CD4-positive, alpha-beta T cell (primary cell): ENCODE measurements at regions of chr7 and their contacts with region 1.

Region 1: GRCh38 chr7:38398725-38399321 is 125.4 kb upstream of the TARP start:
- DNase-seq: peak; percentile 28 to 77 (median 50)
- ATAC-seq: peak; percentile 86
- H3K4me3 ChIP-seq: no peak overlapping the region
- H3K4me3 Mint-ChIP-seq: no peak overlapping the region
- H3K27ac ChIP-seq: no peak overlapping the region
- H3K27ac Mint-ChIP-seq: no peak overlapping the region
- H3K4me1 ChIP-seq: no peaks in the 10 kb centered on the region
- H3K4me1 Mint-ChIP-seq: no peaks in the 10 kb centered on the region
- H3K27me3 ChIP-seq: peaks cover 0 to 3% of the 10 kb centered on the region in 2 experiments
- H3K27me3 Mint-ChIP-seq: peaks cover 16% of the 10 kb centered on the region
- CTCF ChIP-seq: peak; percentile 97

Region 2: GRCh38 chr7:38542156-38542555 is 143.3 kb after region 1 on chr7:
- CTCF ChIA-PET with region 1: no interaction called
- POLR2A ChIA-PET with region 1: no interaction called
- intact Hi-C with region 1: loop called (anchors 1 to 5 kb)
- DNase-seq: no peak
- ATAC-seq: no peak
- H3K4me3 ChIP-seq: no peak overlapping the region
- H3K4me3 Mint-ChIP-seq: no peak overlapping the region
- H3K27ac ChIP-seq: no peak overlapping the region
- H3K27ac Mint-ChIP-seq: no peak overlapping the region
- H3K4me1 ChIP-seq: no peaks in the 10 kb centered on the region
- H3K4me1 Mint-ChIP-seq: no peaks in the 10 kb centered on the region
- H3K27me3 ChIP-seq: peaks cover 0 to 5% of the 10 kb centered on the region in 2 experiments
- H3K27me3 Mint-ChIP-seq: peaks cover 1% of the 10 kb centered on the region
- CTCF ChIP-seq: no peak

Region 3: GRCh38 chr7:38574086-38574485 is 175.3 kb after region 1 on chr7:
- CTCF ChIA-PET with region 1: no interaction called
- POLR2A ChIA-PET with region 1: no interaction called
- intact Hi-C with region 1: no loop called
- DNase-seq: no peak
- ATAC-seq: no peak
- H3K4me3 ChIP-seq: no peak overlapping the region
- H3K4me3 Mint-ChIP-seq: no peak overlapping the region
- H3K27ac ChIP-seq: no peak overlapping the region
- H3K27ac Mint-ChIP-seq: no peak overlapping the region
- H3K4me1 ChIP-seq: no peaks in the 10 kb centered on the region
- H3K4me1 Mint-ChIP-seq: no peaks in the 10 kb centered on the region
- H3K27me3 ChIP-seq: no peaks in the 10 kb centered on the region
- H3K27me3 Mint-ChIP-seq: no peaks in the 10 kb centered on the region
- CTCF ChIP-seq: no peak

Region 4: GRCh38 chr7:38660427-38661099 is 261.7 kb after region 1 on chr7:
- CTCF ChIA-PET with region 1: interaction called, 10 read pairs
- POLR2A ChIA-PET with region 1: no interaction called
- intact Hi-C with region 1: loop called (anchors 1 kb)
- DNase-seq: peak in 6 of 14 experiments; percentile 4 to 60 (median 32)
- ATAC-seq: peak; percentile 63
- H3K4me3 ChIP-seq: no peak overlapping the region
- H3K4me3 Mint-ChIP-seq: no peak overlapping the region
- H3K27ac ChIP-seq: no peak overlapping the region
- H3K27ac Mint-ChIP-seq: no peak overlapping the region
- H3K4me1 ChIP-seq: no peaks in the 10 kb centered on the region
- H3K4me1 Mint-ChIP-seq: no peaks in the 10 kb centered on the region
- H3K27me3 ChIP-seq: peaks cover 0 to 4% of the 10 kb centered on the region in 2 experiments
- H3K27me3 Mint-ChIP-seq: peaks cover 34% of the 10 kb centered on the region
- CTCF ChIP-seq: peak; percentile 58

Region 5: DNA sequence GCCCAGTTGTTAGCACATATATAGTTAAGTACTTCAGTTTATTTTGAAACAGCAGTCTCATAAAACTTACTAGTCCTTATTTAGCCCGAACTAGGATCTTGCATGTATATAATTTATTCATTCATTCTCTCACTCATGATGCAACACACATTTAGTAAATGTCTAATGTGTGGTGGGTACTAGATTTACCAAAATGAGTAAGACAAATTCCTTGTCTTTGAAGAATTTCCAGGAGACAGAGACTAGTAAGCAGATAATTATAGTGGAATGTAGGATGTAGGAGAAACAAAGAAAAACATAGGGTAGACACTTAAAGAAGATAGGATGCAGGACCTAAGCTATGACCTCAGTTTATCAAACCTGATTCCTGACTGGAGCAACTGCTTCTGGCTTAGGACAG is 352.6 kb after region 1 on chr7:
- CTCF ChIA-PET with region 1: no interaction called
- POLR2A ChIA-PET with region 1: no interaction called
- intact Hi-C with region 1: loop called (anchors 5 to 10 kb)
- DNase-seq: no peak
- ATAC-seq: no peak
- H3K4me3 ChIP-seq: no peak overlapping the region
- H3K4me3 Mint-ChIP-seq: no peak overlapping the region
- H3K27ac ChIP-seq: no peak overlapping the region
- H3K27ac Mint-ChIP-seq: no peak overlapping the region
- H3K4me1 ChIP-seq: no peaks in the 10 kb centered on the region
- H3K4me1 Mint-ChIP-seq: no peaks in the 10 kb centered on the region
- H3K27me3 ChIP-seq: no peaks in the 10 kb centered on the region
- H3K27me3 Mint-ChIP-seq: no peaks in the 10 kb centered on the region
- CTCF ChIP-seq: no peak

Region 6: GRCh38 chr7:39465055-39465929 is 1066.5 kb after region 1 on chr7:
- CTCF ChIA-PET with region 1: no interaction called
- POLR2A ChIA-PET with region 1: no interaction called
- intact Hi-C with region 1: loop called in 1 of 2 experiments (anchors 2 kb)
- DNase-seq: peak in 9 of 14 experiments; percentile 1 to 53 (median 14)
- ATAC-seq: peak; percentile 49
- H3K4me3 ChIP-seq: no peak overlapping the region
- H3K4me3 Mint-ChIP-seq: no peak overlapping the region
- H3K27ac ChIP-seq: no peak overlapping the region
- H3K27ac Mint-ChIP-seq: no peak overlapping the region
- H3K4me1 ChIP-seq: no peaks in the 10 kb centered on the region
- H3K4me1 Mint-ChIP-seq: peaks cover 7% of the 10 kb centered on the region
- H3K27me3 ChIP-seq: peaks cover 0 to 5% of the 10 kb centered on the region in 2 experiments
- H3K27me3 Mint-ChIP-seq: peaks cover 19% of the 10 kb centered on the region
- CTCF ChIP-seq: peak; percentile 69

Region 7: DNA sequence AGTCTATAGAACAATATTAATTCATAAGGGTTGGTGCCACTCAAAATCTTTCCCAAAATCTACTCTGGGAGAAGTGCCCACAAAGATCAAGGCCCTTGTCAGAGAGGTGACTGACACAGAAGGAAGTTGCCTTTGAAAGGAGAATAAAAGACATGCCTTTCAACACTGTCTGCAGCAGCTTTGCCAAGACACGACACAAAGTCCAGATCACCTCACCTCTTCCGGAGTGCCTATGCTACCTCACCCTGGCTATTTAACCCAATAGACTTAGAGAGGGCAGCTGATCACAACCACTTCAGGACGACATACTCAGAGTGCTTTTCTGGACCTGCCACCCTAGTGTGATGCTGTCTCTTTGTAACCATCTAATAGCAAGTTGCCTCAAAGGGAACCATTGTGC is 1118.4 kb after region 1 on chr7:
- CTCF ChIA-PET with region 1: no interaction called
- POLR2A ChIA-PET with region 1: no interaction called
- intact Hi-C with region 1: loop called (anchors 1 to 2 kb)
- DNase-seq: no peak
- ATAC-seq: no peak
- H3K4me3 ChIP-seq: no peak overlapping the region
- H3K4me3 Mint-ChIP-seq: no peak overlapping the region
- H3K27ac ChIP-seq: no peak overlapping the region
- H3K27ac Mint-ChIP-seq: no peak overlapping the region
- H3K4me1 ChIP-seq: peaks cover 6% of the 10 kb centered on the region
- H3K4me1 Mint-ChIP-seq: peaks cover 4% of the 10 kb centered on the region
- H3K27me3 ChIP-seq: peaks cover 0 to 3% of the 10 kb centered on the region in 2 experiments
- H3K27me3 Mint-ChIP-seq: peaks cover 3% of the 10 kb centered on the region
- CTCF ChIP-seq: no peak